A549 (cell line): ENCODE measurements at regions of chr17 and their contacts with region 1.

Region 1: GRCh38 chr17:44864866-44865660 is 17.4 kb downstream of the HIGD1B start:
- DNase-seq: peak; percentile 82 to 88
- ATAC-seq: peak; percentile 80 to 88
- H3K4me3 ChIP-seq: no peak overlapping the region
- H3K27ac ChIP-seq: no peak overlapping the region
- H3K4me1 ChIP-seq: no peaks in the 10 kb centered on the region
- CTCF ChIP-seq: peak; percentile 98
- EP300 ChIP-seq: no peak
- POLR2A ChIP-seq: no peak
- RAD21 ChIP-seq: peak; percentile 77 to 78

Region 2: DNA sequence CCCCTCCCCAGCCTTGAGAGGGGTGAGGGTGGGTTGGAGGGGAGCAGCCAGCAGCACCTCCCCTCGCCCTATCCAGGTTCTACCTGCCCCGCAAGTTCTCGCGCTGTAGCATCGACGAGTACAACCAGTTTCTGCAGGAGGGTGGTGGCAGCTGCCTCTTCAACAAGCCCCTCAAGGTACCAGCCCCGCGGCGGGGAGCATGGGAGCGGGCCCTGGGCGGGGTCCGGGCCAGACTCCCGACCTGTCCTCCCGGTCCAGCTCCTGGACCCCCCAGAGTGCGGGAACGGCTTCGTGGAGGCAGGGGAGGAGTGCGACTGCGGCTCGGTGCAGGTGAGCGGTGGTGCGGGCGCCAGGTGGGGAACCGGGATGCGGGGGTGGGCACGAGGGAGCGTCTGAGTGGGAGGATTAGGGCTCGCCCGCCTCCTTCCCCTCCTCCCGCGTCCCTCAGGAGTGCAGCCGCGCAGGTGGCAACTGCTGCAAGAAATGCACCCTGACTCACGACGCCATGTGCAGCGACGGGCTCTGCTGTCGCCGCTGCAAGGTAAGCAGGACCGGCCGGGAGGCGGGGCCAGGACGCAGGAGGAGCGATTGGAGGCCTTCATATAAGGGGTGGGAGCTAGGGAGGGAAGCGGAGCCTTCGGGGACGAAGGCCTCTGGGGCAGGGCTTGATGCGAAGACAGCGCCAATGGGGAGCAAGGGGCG is 89.8 kb before region 1 on chr17:
- CTCF ChIA-PET with region 1: interaction called, 1,787 read pairs
- POLR2A ChIA-PET with region 1: interaction called, 4 read pairs
- DNase-seq: peak; percentile 99
- ATAC-seq: peak; percentile 78 to 92
- H3K4me3 ChIP-seq: peak overlapping the region; percentile 54
- H3K27ac ChIP-seq: peak overlapping the region; percentile 13 to 64; a peak in 4 of 6 replicates
- H3K4me1 ChIP-seq: peaks cover 17% of the 10 kb centered on the region
- CTCF ChIP-seq: peak; percentile 34; the same call in 1 of the 3 replicates
- EP300 ChIP-seq: no peak
- POLR2A ChIP-seq: peak; percentile 58
- RAD21 ChIP-seq: peak in 1 of 2 experiments; percentile 8; a peak in 1 of 5 replicates

Region 3: DNA sequence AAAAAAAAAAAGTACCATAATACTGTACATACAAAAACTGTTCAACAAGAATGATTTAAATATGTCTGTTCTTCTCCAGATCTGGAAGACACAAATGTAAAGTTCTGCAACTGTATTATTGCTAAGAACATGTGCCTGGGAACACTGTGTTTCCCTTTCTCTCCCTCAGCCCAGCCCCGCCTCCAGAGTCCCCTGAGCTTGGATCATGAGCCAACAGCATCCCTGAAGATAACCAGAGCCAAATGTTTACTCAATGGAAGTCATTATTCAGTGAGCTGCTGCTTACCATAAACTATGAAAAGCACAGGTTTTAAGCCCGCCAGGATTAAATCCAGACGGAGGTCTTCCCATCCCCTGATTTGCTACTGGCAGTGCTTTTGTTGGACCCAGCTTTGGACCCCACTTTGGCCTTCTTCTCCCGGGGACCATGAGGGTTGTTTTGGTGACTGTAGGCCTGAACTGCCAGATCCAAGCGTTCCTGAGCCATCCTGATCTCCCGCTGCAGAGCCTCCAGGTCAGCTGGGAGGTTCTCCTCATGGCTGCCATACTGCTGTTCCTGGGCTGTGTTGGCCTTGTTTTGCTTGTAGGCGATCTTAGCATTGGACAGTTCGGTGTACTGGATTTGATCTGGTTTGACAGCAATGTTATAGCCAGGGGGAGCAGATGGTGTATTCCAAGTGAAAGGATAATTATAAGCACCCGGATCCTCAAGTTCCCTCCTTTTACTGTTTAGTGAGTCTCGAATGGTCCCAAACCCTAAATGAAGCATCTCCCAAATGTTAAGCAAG is 60.6 kb before region 1 on chr17:
- CTCF ChIA-PET with region 1: interaction called, 25 read pairs
- POLR2A ChIA-PET with region 1: no interaction called
- DNase-seq: no peak
- ATAC-seq: no peak; a peak in 1 of 6 replicates
- H3K4me3 ChIP-seq: no peak overlapping the region
- H3K27ac ChIP-seq: no peak overlapping the region
- H3K4me1 ChIP-seq: peaks cover 8% of the 10 kb centered on the region; the same call in 2 of the 3 replicates
- CTCF ChIP-seq: no peak
- EP300 ChIP-seq: no peak
- POLR2A ChIP-seq: no peak
- RAD21 ChIP-seq: no peak

Region 4: GRCh38 chr17:44820631-44821212 is 44.3 kb before region 1 on chr17:
- CTCF ChIA-PET with region 1: interaction called, 21 read pairs
- POLR2A ChIA-PET with region 1: interaction called, 11 read pairs
- DNase-seq: peak; percentile 67 to 79
- ATAC-seq: peak; percentile 88 to 89; a peak in 5 of 6 replicates
- H3K4me3 ChIP-seq: peak overlapping the region; percentile 6; the same call in 1 of the 3 replicates
- H3K27ac ChIP-seq: peak overlapping the region; percentile 37 to 75; a peak in 5 of 6 replicates
- H3K4me1 ChIP-seq: peaks cover 36% of the 10 kb centered on the region
- CTCF ChIP-seq: no peak
- EP300 ChIP-seq: no peak
- POLR2A ChIP-seq: no peak
- RAD21 ChIP-seq: no peak

Region 5: DNA sequence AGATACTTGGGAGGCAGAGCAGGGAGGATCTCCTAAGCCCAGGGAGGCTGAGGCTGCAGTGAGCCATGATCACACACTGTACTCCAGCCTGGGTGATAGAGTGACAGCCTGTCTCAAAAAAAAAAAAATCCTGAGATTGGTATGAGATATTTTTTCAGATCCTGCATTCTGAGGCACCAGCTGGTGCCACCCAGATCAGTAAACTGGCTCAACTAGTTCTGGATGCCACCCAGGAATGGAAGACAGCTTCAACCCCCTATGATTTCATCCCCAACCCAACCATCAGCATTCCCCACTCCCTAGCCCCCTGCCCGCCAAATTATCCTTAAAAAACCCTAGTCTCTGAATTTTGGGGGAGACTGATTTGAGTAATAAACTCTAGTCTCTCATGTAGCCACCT is 27.8 kb before region 1 on chr17:
- CTCF ChIA-PET with region 1: interaction called, 31 read pairs
- POLR2A ChIA-PET with region 1: no interaction called
- DNase-seq: no peak
- ATAC-seq: peak; percentile 11 to 21; a peak in 3 of 6 replicates
- H3K4me3 ChIP-seq: no peak overlapping the region
- H3K27ac ChIP-seq: no peak overlapping the region
- H3K4me1 ChIP-seq: no peaks in the 10 kb centered on the region
- CTCF ChIP-seq: no peak
- EP300 ChIP-seq: no peak
- POLR2A ChIP-seq: no peak
- RAD21 ChIP-seq: no peak

Region 6: DNA sequence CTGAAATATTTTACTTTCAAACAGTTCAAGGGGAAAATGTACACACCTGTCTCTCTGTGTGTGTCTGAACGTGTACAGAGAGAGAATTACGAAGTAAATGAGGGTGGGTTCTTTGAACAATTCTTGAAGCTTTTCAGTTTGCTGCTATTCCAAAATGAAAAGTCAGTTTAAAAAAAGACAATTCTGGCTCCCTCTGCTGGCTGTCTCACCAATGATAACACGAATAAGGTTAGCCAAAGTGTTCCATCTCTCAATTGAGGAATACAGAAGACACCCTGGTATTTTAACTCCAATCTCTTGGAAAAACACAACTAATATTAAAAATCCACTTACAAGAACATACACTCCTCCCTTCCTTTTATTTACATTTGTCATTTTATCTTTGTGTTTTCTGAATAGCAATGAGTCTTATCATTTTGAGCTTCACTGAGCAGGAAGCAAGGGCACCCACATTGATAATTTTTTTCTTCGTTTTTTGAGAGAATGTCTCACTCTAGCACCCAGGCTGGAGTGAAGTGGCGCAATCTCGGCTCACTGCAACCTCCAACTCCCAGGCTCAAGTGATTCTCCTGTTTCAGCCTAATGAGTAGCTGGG is 13.7 kb after region 1 on chr17:
- CTCF ChIA-PET with region 1: interaction called, 294 read pairs
- POLR2A ChIA-PET with region 1: no interaction called
- DNase-seq: peak; percentile 45 to 80
- ATAC-seq: peak; percentile 80 to 85; a peak in 5 of 6 replicates
- H3K4me3 ChIP-seq: no peak overlapping the region
- H3K27ac ChIP-seq: no peak overlapping the region
- H3K4me1 ChIP-seq: no peaks in the 10 kb centered on the region
- CTCF ChIP-seq: peak; percentile 94
- EP300 ChIP-seq: no peak
- POLR2A ChIP-seq: no peak
- RAD21 ChIP-seq: peak; percentile 54

Region 7: GRCh38 chr17:44899069-44899782 is 34.2 kb after region 1 on chr17 and contains the start of gene EFTUD2:
- CTCF ChIA-PET with region 1: interaction called, 15 read pairs
- POLR2A ChIA-PET with region 1: no interaction called
- DNase-seq: peak; percentile 94 to 96
- ATAC-seq: peak; percentile 83 to 85
- H3K4me3 ChIP-seq: peak within 1 kb of the TSS; percentile 65
- H3K27ac ChIP-seq: peak within 1 kb of the TSS; percentile 87 to 96
- H3K4me1 ChIP-seq: peaks cover 37% of the 10 kb centered on the region
- CTCF ChIP-seq: no peak
- EP300 ChIP-seq: peak in 1 of 2 experiments; percentile 25; a peak in 1 of 5 replicates
- POLR2A ChIP-seq: peak; percentile 85
- RAD21 ChIP-seq: peak in 1 of 2 experiments; percentile 18; a peak in 2 of 5 replicates
- polyA plus RNA-seq, gene EFTUD2: 254 and 353 TPM in 2 replicates